ENCODE measurements at regions of chr2 and their contacts with region 1.

Region 1: GRCh38 chr2:57906152-57906732 is 140.4 kb upstream of the VRK2 start:
- DNase-seq: peak; percentile 28
- H3K4me3 ChIP-seq: no peak overlapping the region
- H3K27ac ChIP-seq: no peak overlapping the region
- H3K4me1 ChIP-seq: no peaks in the 10 kb centered on the region
- H3K27me3 ChIP-seq: no peaks in the 10 kb centered on the region
- CTCF ChIP-seq: peak; percentile 86 to 93

Region 2: GRCh38 chr2:57809230-57809629 is 97.0 kb before region 1 on chr2:
- CTCF ChIA-PET with region 1: no interaction called
- dilution Hi-C with region 1: no loop called
- in situ Hi-C with region 1: no loop called
- intact Hi-C with region 1: no loop called
- DNase-seq: no peak
- H3K4me3 ChIP-seq: no peak overlapping the region
- H3K27ac ChIP-seq: no peak overlapping the region
- H3K4me1 ChIP-seq: no peaks in the 10 kb centered on the region
- H3K27me3 ChIP-seq: no peaks in the 10 kb centered on the region
- CTCF ChIP-seq: no peak

Region 3: GRCh38 chr2:58046585-58047372 is 140.5 kb after region 1 on chr2 and contains the start of gene VRK2:
- CTCF ChIA-PET with region 1: no interaction called
- dilution Hi-C with region 1: no loop called
- in situ Hi-C with region 1: no loop called
- intact Hi-C with region 1: loop called (anchors 5 kb)
- DNase-seq: peak; percentile 97
- H3K4me3 ChIP-seq: peak within 1 kb of the TSS; percentile 61 to 94 (median 77)
- H3K27ac ChIP-seq: peak within 1 kb of the TSS; percentile 86
- H3K4me1 ChIP-seq: peaks cover 16% of the 10 kb centered on the region
- H3K27me3 ChIP-seq: no peaks in the 10 kb centered on the region
- CTCF ChIP-seq: peak in 1 of 2 donors; percentile 24
- total RNA-seq, gene VRK2: 25.5 to 27.5 TPM

Region 4: GRCh38 chr2:58215429-58215828 is 309.2 kb after region 1 on chr2:
- CTCF ChIA-PET with region 1: no interaction called
- dilution Hi-C with region 1: no loop called
- in situ Hi-C with region 1: no loop called
- intact Hi-C with region 1: loop called (anchors 1 kb)
- DNase-seq: no peak
- H3K4me3 ChIP-seq: no peak overlapping the region
- H3K27ac ChIP-seq: no peak overlapping the region
- H3K4me1 ChIP-seq: no peaks in the 10 kb centered on the region
- H3K27me3 ChIP-seq: no peaks in the 10 kb centered on the region
- CTCF ChIP-seq: no peak

Region 5: GRCh38 chr2:58448065-58448507 is 541.8 kb after region 1 on chr2:
- CTCF ChIA-PET with region 1: interaction called, 8 read pairs
- dilution Hi-C with region 1: no loop called
- in situ Hi-C with region 1: loop called in 1 of 2 experiments (anchors 25 kb)
- intact Hi-C with region 1: loop called (anchors 1 kb)
- DNase-seq: peak; percentile 35
- H3K4me3 ChIP-seq: no peak overlapping the region
- H3K27ac ChIP-seq: no peak overlapping the region
- H3K4me1 ChIP-seq: peaks cover 7% of the 10 kb centered on the region
- H3K27me3 ChIP-seq: no peaks in the 10 kb centered on the region
- CTCF ChIP-seq: peak; percentile 53 to 67

Region 6: DNA sequence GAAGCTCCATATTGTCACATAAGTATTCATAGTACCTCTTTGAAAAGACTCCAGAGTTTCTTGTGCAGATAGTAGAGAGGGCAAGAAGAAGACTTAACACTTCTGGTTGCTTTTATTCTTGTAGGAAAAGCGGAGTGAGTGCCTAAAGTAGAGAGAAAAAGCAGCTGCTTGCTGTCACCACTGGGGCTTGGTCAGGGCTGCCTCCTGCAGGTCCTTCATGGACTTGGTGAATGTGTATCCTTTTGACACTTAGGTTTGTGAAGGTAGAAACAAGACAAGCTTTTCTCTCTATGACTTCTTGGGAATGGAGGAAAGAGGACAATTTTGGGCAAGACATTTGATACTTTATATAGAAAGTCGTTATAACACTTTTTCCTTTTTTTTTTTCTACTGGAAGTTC is 647.7 kb after region 1 on chr2:
- CTCF ChIA-PET with region 1: no interaction called
- dilution Hi-C with region 1: no loop called
- in situ Hi-C with region 1: no loop called
- intact Hi-C with region 1: loop called (anchors 1 kb)
- DNase-seq: no peak
- H3K4me3 ChIP-seq: no peak overlapping the region
- H3K27ac ChIP-seq: no peak overlapping the region
- H3K4me1 ChIP-seq: no peaks in the 10 kb centered on the region
- H3K27me3 ChIP-seq: peaks cover 2% of the 10 kb centered on the region
- CTCF ChIP-seq: peak; percentile 14 to 49

Region 7: DNA sequence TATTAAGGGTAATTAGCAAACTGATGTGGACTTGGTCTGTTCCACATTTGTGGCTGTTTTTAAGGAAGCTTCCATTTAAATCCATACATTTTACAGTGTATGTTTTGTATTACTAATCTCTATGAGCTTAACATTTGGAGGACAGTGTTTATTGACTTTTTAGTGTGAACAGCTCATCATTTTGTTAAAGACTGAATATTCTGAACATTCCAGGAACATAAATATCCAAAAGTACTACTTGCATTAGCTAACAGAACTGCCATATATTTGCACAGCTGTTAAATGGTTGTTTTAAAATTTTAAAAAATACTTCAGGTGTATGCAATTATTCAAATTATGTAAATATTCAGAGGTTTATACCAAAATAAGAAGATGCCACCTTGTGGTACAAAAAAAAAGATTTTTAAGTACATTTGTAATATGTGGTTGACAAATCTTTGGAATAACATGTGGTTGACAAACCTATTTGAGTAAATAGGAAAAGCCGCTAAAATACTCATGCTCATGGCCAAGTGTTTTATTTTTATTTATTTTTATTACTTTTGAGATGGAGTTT is 774.6 kb after region 1 on chr2:
- CTCF ChIA-PET with region 1: no interaction called
- dilution Hi-C with region 1: no loop called
- in situ Hi-C with region 1: no loop called
- intact Hi-C with region 1: loop called (anchors 2 kb)
- DNase-seq: no peak
- H3K4me3 ChIP-seq: no peak overlapping the region
- H3K27ac ChIP-seq: no peak overlapping the region
- H3K4me1 ChIP-seq: no peaks in the 10 kb centered on the region
- H3K27me3 ChIP-seq: no peaks in the 10 kb centered on the region
- CTCF ChIP-seq: peak; percentile 6 to 26

Measured in mammary epithelial cell (primary cell).